ENCODE measurements at regions of chr22 and their contacts with region 1.

Region 1: GRCh38 chr22:41998361-41999275 is at the start of gene WBP2NL:
- DNase-seq: peak; percentile 94
- H3K4me3 Mint-ChIP-seq: peak within 1 kb of the TSS; percentile 87
- H3K27ac Mint-ChIP-seq: peak within 1 kb of the TSS; percentile 81
- H3K4me1 Mint-ChIP-seq: peaks cover 18% of the 10 kb centered on the region
- H3K27me3 Mint-ChIP-seq: no peaks in the 10 kb centered on the region
- total RNA-seq, gene WBP2NL: 0.82 to 1.5 TPM

Region 2: GRCh38 chr22:41976401-41976901 is 22.2 kb before region 1 on chr22:
- CTCF ChIA-PET with region 1: no interaction called
- POLR2A ChIA-PET with region 1: no interaction called
- intact Hi-C with region 1: loop called (anchors 2 kb)
- DNase-seq: peak; percentile 65
- H3K4me3 Mint-ChIP-seq: peak overlapping the region; percentile 60
- H3K27ac Mint-ChIP-seq: no peak overlapping the region
- H3K4me1 Mint-ChIP-seq: peaks cover 20% of the 10 kb centered on the region
- H3K27me3 Mint-ChIP-seq: peaks cover 32% of the 10 kb centered on the region

Region 3: GRCh38 chr22:42022162-42022835 is 23.7 kb after region 1 on chr22:
- CTCF ChIA-PET with region 1: no interaction called
- POLR2A ChIA-PET with region 1: no interaction called
- intact Hi-C with region 1: no loop called
- DNase-seq: peak; percentile 21
- H3K4me3 Mint-ChIP-seq: no peak overlapping the region
- H3K27ac Mint-ChIP-seq: no peak overlapping the region
- H3K4me1 Mint-ChIP-seq: peaks cover 11% of the 10 kb centered on the region
- H3K27me3 Mint-ChIP-seq: peaks cover 2% of the 10 kb centered on the region

Region 4: DNA sequence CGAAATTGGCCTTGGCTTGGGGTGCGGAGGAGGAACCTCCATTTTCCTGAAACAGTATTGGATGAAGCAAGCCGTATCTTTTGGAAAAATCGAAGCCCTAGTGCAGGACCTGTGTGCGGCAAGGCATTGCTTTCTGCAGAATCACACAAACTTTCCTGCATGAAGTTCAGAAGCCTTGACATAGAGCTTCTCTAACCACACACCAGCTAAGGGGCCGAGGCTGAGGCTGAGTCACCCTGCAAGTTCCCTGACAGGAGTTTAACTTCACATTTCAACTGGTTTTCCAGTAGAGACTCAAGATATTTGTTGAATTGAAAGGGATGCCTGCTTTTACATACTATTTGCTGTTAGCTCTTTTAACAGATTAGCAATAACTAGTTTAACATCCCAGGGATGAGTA is 204.1 kb after region 1 on chr22:
- CTCF ChIA-PET with region 1: no interaction called
- POLR2A ChIA-PET with region 1: no interaction called
- intact Hi-C with region 1: no loop called
- DNase-seq: peak; percentile 80
- H3K4me3 Mint-ChIP-seq: peak overlapping the region; percentile 71
- H3K27ac Mint-ChIP-seq: peak overlapping the region; percentile 85
- H3K4me1 Mint-ChIP-seq: peaks cover 56% of the 10 kb centered on the region
- H3K27me3 Mint-ChIP-seq: no peaks in the 10 kb centered on the region